ENCODE measurements at regions of chr12 and their contacts with region 1.

Region 1: GRCh38 chr12:106302401-106303201 is at the start of gene TCP11L2:
- DNase-seq: peak; percentile 87 to 96 (median 95)
- ATAC-seq: peak; percentile 47 to 48
- H3K4me3 Mint-ChIP-seq: peak within 1 kb of the TSS; percentile 92 to 99 (median 96)
- H3K27ac Mint-ChIP-seq: peak within 1 kb of the TSS; percentile 97 to 100 (median 100)
- H3K4me1 Mint-ChIP-seq: peaks cover 43 to 64% (median 58%) of the 10 kb centered on the region in 4 donors
- H3K27me3 Mint-ChIP-seq: no peaks in the 10 kb centered on the region
- polyA plus RNA-seq, gene TCP11L2: 30.6 to 45.4 (median 34.7) TPM

Region 2: DNA sequence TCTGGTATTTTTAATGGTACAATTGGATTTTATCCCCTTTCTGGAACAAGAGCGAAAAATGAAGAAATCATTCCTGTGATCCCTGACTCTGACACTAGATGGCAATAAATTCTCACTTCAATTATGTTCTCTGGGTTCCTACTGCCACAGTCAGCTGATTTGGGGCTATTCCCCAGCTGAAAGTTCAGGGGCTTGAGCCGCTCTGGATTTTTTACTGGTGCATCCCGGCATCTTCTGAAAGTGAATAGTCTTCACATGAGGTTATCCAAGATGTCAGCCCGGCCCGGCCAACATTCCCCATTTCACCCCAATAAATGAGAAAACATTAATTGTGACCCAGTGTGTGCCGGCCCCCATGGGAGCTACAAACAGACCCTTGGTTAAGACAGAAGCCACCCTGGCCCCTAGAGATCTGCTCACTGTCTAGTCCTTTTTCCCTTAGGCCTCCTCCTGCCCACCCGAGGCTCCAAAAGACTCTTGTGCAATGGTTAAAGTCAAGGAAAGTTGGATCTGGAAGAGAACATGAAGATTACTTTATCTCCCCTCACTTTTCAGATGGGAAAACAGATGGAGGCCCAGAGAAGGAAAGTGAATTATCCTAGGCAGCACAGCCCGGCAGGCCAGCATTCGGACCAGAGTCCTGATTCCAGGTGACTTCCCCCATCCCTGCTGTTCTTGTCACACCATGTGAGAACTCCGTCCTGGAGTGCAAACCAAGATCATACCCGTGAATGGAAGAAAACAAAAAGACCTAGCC is 75.5 kb before region 1 on chr12:
- POLR2A ChIA-PET with region 1: interaction called, 115 read pairs
- DNase-seq: peak in 7 of 10 donors; percentile 10 to 69 (median 38)
- ATAC-seq: peak; percentile 25 to 45
- H3K4me3 Mint-ChIP-seq: peak overlapping the region; percentile 37 to 82 (median 63)
- H3K27ac Mint-ChIP-seq: peak overlapping the region; percentile 86 to 98 (median 94)
- H3K4me1 Mint-ChIP-seq: peaks cover 18 to 27% (median 23%) of the 10 kb centered on the region in 4 donors
- H3K27me3 Mint-ChIP-seq: peaks cover 0 to 5% (median 2%) of the 10 kb centered on the region in 5 donors

Region 3: DNA sequence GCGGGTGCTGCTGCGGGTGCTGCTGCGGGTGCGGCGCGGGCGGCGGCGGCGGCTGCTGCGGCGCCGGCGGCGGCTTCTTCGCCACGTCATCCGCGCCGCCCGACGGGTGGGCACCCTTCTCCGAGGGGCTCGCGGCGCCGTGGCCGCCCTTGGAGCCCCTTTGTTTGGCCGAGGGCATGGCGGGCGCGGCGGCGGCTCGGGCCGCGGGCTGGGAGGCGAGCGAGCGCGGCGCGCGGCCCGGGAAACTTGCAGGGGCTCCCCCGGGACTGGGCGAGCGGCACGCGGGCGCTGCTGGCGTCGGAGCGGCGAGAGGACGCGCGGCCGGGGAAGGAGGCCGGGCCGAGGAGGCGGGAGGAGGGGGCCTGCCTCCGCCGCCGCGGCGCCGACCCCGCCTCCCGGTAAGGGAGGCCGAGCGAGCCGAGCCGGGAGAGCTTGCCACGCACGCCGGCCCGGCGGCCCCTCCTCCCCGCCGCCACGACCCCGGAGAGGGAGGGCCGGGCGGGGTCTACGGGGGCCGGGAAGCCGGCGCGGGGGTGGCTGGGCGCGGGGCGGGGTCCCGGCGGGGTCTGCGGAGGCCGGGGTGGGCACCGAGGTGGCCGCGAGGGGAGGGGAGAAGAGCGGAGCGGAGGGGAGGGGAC is 54.8 kb before region 1 on chr12 and contains the start of gene CKAP4:
- POLR2A ChIA-PET with region 1: interaction called, 118 read pairs
- DNase-seq: peak; percentile 38 to 76 (median 60)
- ATAC-seq: peak; percentile 50 to 60
- H3K4me3 Mint-ChIP-seq: peak within 1 kb of the TSS; percentile 75 to 91 (median 86)
- H3K27ac Mint-ChIP-seq: peak within 1 kb of the TSS; percentile 69 to 98 (median 95)
- H3K4me1 Mint-ChIP-seq: peaks cover 17 to 53% (median 43%) of the 10 kb centered on the region in 4 donors
- H3K27me3 Mint-ChIP-seq: no peaks in the 10 kb centered on the region
- polyA plus RNA-seq, gene CKAP4: 11.2 to 11.9 (median 11.2) TPM

Region 4: DNA sequence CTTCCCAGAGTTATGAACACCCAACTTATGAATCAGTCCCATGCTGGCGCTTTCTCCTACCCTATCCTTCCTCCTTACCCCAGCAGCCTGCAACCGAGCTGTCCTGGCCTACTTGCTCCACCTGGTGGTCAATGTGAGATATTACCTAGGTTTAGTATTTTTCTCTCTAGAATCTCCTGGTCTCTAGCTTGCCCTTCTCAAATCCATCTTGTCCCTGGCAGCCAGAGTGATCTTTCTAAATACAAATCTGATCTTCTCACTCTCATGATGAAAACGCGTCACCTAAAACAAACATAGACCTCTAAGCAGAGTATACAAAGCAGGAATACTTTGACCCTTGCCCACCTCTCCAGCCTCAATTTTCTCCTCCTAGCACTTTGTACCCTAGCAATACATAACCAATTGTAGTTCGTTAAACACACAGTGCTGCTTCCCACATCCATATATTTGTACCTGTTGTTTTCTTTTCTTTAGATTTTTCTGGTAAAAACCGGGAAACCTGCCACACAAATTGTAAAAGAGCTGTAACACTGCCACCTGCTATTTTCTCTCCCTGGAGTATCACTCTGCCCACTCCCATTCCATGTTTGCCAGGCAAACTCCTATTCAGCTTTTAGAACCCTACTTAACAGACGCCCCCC is 20.0 kb before region 1 on chr12:
- POLR2A ChIA-PET with region 1: interaction called, 63 read pairs
- DNase-seq: peak; percentile 10 to 76 (median 47)
- ATAC-seq: peak; percentile 77 to 79
- H3K4me3 Mint-ChIP-seq: no peak overlapping the region
- H3K27ac Mint-ChIP-seq: peak overlapping the region in 4 of 10 donors; percentile 0 to 84 (median 14)
- H3K4me1 Mint-ChIP-seq: peaks cover 0 to 18% (median 10%) of the 10 kb centered on the region in 4 donors
- H3K27me3 Mint-ChIP-seq: peaks cover 2 to 9% (median 6%) of the 10 kb centered on the region in 5 donors

Region 5: DNA sequence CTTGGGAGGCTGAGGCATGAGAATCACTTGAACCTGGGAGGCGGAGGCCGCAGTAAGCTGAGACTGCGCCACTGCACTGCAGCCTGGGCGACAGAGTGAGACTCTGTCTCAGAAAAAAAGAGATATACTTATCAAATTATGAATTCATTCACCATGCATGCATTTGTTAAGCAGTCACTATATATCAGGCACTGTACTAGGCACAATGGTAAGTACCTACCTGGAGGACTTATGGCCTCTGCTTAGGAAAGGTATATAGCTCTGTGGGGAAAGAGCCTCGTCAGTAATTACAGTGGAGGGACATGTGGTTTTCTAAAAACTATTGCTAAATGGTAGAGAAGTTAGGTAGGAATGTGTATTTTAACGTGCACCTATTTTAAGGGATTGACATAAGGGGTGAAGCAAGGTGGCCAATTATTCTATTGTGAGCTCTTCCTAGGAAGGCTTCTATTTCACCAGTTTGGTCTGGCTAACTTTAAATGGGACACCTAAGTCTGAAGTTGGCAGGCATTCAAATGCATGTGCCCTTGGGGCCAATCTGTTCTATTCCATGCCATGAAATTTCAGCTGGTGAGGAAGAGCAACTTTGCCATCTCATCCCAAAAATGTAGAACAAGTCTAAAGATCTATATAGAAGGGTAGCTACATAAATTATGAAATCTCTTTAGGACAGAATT is 14.9 kb after region 1 on chr12:
- POLR2A ChIA-PET with region 1: interaction called, 16 read pairs
- DNase-seq: no peak
- ATAC-seq: no peak
- H3K4me3 Mint-ChIP-seq: no peak overlapping the region
- H3K27ac Mint-ChIP-seq: peak overlapping the region in 1 of 10 donors; percentile 19
- H3K4me1 Mint-ChIP-seq: peaks cover 7 to 17% (median 11%) of the 10 kb centered on the region in 4 donors
- H3K27me3 Mint-ChIP-seq: no peaks in the 10 kb centered on the region

Region 6: DNA sequence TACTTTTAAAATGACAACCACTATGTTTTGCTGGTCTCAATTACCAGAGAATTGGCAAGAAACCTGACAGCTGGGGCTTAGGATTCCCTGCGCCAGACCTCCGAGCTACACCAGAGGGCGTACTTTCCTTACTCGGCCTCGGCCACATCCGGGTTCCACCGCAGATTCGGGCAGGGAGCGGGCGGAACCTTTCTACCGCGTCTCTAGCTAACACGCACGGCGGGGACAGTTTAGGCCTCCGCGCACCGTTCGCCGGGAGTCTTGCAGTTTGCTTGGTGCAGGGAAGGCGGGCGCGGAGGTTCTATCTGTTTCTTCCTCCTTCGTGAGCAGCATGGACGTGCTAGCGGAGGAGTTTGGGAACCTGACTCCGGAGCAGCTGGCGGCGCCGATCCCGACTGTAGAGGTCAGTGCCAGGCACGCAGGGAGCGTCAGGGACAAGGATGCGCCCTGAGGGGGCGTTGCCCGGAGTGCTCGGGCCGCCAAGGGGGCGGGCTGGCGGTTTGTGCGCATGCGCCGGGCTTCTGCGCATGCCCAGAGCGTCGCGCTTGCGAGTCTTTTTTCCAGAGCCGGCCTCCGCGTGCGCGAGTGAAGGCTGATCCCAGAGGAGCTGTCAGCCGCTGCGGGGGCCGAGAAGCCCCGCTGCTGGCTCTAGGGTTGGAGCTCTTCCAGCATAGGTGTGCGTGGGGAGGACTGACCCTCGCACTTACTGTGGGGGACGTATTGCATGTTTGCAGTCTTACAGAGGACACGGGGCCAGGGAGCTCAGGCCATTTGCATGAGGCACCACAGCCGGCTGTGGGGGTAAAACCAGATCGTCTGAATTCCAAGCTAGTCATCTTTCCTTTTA is 55.2 kb after region 1 on chr12 and contains the start of gene POLR3B:
- POLR2A ChIA-PET with region 1: interaction called, 57 read pairs
- DNase-seq: peak; percentile 90 to 100 (median 96)
- ATAC-seq: peak; percentile 93 to 94
- H3K4me3 Mint-ChIP-seq: peak within 1 kb of the TSS; percentile 82 to 97 (median 93)
- H3K27ac Mint-ChIP-seq: peak within 1 kb of the TSS; percentile 80 to 97 (median 93)
- H3K4me1 Mint-ChIP-seq: peaks cover 10 to 20% (median 19%) of the 10 kb centered on the region in 4 donors
- H3K27me3 Mint-ChIP-seq: peaks cover 0 to 3% (median 0%) of the 10 kb centered on the region in 5 donors
- polyA plus RNA-seq, gene POLR3B: 3.1 to 6.2 (median 4.2) TPM

Region 7: GRCh38 chr12:106436164-106436563 is 133.6 kb after region 1 on chr12:
- POLR2A ChIA-PET with region 1: no interaction called
- DNase-seq: no peak
- ATAC-seq: no peak
- H3K4me3 Mint-ChIP-seq: no peak overlapping the region
- H3K27ac Mint-ChIP-seq: no peak overlapping the region
- H3K4me1 Mint-ChIP-seq: no peaks in the 10 kb centered on the region
- H3K27me3 Mint-ChIP-seq: no peaks in the 10 kb centered on the region

Region 8: DNA sequence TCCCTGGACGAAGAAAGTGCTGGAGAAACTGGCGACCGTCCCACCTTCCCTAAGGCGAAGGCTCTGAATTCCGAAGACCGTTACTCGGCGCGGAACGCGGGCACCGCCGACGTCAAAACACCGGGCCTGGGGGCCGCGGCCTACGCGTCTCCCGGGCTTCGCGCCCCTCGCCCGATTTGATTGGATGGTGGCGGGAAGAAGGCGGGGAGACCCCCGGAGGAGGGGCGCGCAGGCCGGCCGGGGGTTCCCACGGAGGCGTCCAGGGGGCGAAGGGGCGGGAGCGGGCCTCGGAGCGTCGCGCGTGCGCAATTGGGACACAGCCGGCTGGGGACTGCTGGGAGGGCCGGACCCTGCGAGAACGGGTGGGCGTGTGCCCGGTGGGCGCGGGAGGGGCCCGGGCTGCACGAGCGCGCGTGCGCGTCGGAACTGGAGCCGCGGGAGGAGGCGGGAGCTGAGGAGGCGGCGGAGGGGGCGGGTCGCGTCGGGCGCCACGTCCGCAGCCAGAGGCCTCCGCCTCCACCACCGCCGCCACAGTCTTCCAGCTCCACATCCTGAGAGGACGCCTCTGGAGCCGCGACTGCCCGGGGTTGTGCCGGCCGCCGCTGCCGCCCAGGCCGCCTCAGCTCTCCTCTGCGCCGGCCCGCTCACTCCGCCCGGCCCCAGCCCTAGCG is 652.9 kb after region 1 on chr12 and contains the start of gene TMEM263:
- POLR2A ChIA-PET with region 1: interaction called, 16 read pairs
- DNase-seq: peak; percentile 90 to 96 (median 93)
- ATAC-seq: peak; percentile 76 to 79
- H3K4me3 Mint-ChIP-seq: peak within 1 kb of the TSS; percentile 94 to 100 (median 98)
- H3K27ac Mint-ChIP-seq: peak within 1 kb of the TSS; percentile 93 to 98 (median 97)
- H3K4me1 Mint-ChIP-seq: peaks cover 19 to 38% (median 30%) of the 10 kb centered on the region in 4 donors
- H3K27me3 Mint-ChIP-seq: no peaks in the 10 kb centered on the region
- polyA plus RNA-seq, gene TMEM263: 38.7 to 54.7 (median 38.9) TPM